Activated CD4-positive, alpha-beta memory T cell treated with anti-CD3 and anti-CD28 coated beads for 36 hours (primary cell): ENCODE measurements at regions of chr19 and their contacts with region 1.

Region 1: GRCh38 chr19:16247353-16248182 is 49.9 kb downstream of the AP1M1 start:
- DNase-seq: peak; percentile 88
- H3K4me3 Mint-ChIP-seq: no peak overlapping the region
- H3K27ac Mint-ChIP-seq: no peak overlapping the region
- H3K4me1 Mint-ChIP-seq: peaks cover 12% of the 10 kb centered on the region
- H3K27me3 Mint-ChIP-seq: no peaks in the 10 kb centered on the region

Region 2: GRCh38 chr19:15911599-15912235 is 335.9 kb before region 1 on chr19:
- CTCF ChIA-PET with region 1: no interaction called
- POLR2A ChIA-PET with region 1: no interaction called
- intact Hi-C with region 1: no loop called
- DNase-seq: no peak
- H3K4me3 Mint-ChIP-seq: no peak overlapping the region
- H3K27ac Mint-ChIP-seq: no peak overlapping the region
- H3K4me1 Mint-ChIP-seq: no peaks in the 10 kb centered on the region
- H3K27me3 Mint-ChIP-seq: peaks cover 53% of the 10 kb centered on the region

Region 3: GRCh38 chr19:16376649-16377048 is 129.1 kb after region 1 on chr19:
- CTCF ChIA-PET with region 1: interaction called, 143 read pairs
- POLR2A ChIA-PET with region 1: no interaction called
- intact Hi-C with region 1: no loop called
- DNase-seq: peak; percentile 33
- H3K4me3 Mint-ChIP-seq: no peak overlapping the region
- H3K27ac Mint-ChIP-seq: no peak overlapping the region
- H3K4me1 Mint-ChIP-seq: peaks cover 57% of the 10 kb centered on the region
- H3K27me3 Mint-ChIP-seq: no peaks in the 10 kb centered on the region

Region 4: DNA sequence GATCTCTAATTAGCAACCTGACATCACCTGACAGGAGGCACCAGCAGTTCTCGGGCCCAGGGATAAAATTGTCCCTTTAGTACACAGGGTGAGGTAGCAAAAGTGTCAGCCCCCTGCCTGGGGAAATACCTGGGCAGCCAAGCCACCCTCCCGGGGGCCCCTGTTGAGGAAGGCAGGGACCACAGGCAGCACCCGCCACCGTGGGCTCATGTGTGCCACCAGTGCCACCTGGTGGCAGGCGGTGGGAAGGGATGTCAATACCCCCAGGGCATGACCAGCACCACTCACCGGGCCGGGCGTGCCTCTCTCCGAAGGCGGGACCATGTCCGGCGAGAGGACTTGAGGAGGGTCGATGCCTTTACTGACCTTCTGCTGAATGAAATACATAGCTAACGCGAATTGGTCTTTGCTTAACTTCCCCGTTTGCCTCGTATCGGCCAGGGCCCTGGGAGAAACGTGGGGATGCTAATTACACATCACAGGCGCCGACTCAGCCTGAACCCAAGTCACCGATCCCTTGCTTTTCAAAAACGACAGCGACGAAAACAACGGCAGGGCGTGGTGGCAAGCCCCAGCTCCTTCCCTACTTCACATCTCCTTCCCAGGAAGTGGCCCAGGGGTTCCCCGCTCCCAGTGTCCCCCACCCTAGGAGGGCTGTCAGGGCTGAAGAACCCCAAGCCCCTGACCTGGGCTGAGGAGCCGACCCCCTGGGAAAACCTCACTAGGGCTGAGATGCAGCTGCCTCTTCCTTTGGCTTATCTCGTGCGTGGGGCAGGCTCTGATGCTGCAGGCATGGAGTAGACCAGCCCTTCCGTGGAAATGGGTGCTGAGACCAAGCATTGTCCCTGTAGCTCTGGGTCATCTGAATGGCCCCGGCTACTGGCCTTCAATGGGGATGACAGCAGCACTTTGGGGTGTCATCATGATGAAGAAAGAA is 170.4 kb after region 1 on chr19:
- CTCF ChIA-PET with region 1: interaction called, 10 read pairs
- POLR2A ChIA-PET with region 1: no interaction called
- intact Hi-C with region 1: no loop called
- DNase-seq: peak; percentile 70
- H3K4me3 Mint-ChIP-seq: no peak overlapping the region
- H3K27ac Mint-ChIP-seq: no peak overlapping the region
- H3K4me1 Mint-ChIP-seq: no peaks in the 10 kb centered on the region
- H3K27me3 Mint-ChIP-seq: no peaks in the 10 kb centered on the region